MCF 10A (cell line): ENCODE measurements at regions of chr20 and their contacts with region 1.

Region 1: GRCh38 chr20:19995220-19995863 is 21.8 kb upstream of the NAA20 start:
- DNase-seq: peak; percentile 70
- H3K4me3 Mint-ChIP-seq: no peak overlapping the region
- H3K27ac Mint-ChIP-seq: peak overlapping the region; percentile 86
- H3K4me1 Mint-ChIP-seq: peaks cover 28% of the 10 kb centered on the region
- H3K27me3 Mint-ChIP-seq: no peaks in the 10 kb centered on the region
- CTCF ChIP-seq: peak; percentile 78

Region 2: GRCh38 chr20:19802492-19803158 is 192.7 kb before region 1 on chr20:
- CTCF ChIA-PET with region 1: interaction called, 11 read pairs
- POLR2A ChIA-PET with region 1: interaction called, 16 read pairs
- intact Hi-C with region 1: no loop called
- DNase-seq: peak; percentile 72
- H3K4me3 Mint-ChIP-seq: no peak overlapping the region
- H3K27ac Mint-ChIP-seq: peak overlapping the region; percentile 9
- H3K4me1 Mint-ChIP-seq: peaks cover 18% of the 10 kb centered on the region
- H3K27me3 Mint-ChIP-seq: no peaks in the 10 kb centered on the region
- CTCF ChIP-seq: peak; percentile 21

Region 3: DNA sequence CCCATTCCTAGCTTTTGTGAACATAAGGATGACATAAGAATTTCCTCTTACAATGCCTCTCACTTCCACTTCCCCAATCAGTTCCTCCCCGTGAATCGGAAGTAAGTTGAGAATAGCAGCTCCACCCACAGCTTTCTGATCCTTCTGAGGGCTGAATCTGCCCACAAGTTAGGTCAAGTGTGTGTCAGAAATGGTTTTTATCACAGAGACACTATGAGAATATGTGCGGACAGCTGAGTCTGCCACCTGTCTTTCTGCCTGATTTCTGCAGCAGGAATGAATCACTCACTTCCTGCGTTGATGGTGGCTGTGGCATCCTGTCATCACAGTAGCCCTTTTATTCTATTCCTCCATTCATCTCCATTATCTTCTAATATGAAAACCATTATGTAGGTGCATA is 167.1 kb before region 1 on chr20:
- CTCF ChIA-PET with region 1: interaction called, 15 read pairs
- POLR2A ChIA-PET with region 1: interaction called, 3 read pairs
- intact Hi-C with region 1: no loop called
- DNase-seq: peak; percentile 72
- H3K4me3 Mint-ChIP-seq: peak overlapping the region; percentile 9
- H3K27ac Mint-ChIP-seq: peak overlapping the region; percentile 60
- H3K4me1 Mint-ChIP-seq: peaks cover 17% of the 10 kb centered on the region
- H3K27me3 Mint-ChIP-seq: no peaks in the 10 kb centered on the region
- CTCF ChIP-seq: peak; percentile 46

Region 4: DNA sequence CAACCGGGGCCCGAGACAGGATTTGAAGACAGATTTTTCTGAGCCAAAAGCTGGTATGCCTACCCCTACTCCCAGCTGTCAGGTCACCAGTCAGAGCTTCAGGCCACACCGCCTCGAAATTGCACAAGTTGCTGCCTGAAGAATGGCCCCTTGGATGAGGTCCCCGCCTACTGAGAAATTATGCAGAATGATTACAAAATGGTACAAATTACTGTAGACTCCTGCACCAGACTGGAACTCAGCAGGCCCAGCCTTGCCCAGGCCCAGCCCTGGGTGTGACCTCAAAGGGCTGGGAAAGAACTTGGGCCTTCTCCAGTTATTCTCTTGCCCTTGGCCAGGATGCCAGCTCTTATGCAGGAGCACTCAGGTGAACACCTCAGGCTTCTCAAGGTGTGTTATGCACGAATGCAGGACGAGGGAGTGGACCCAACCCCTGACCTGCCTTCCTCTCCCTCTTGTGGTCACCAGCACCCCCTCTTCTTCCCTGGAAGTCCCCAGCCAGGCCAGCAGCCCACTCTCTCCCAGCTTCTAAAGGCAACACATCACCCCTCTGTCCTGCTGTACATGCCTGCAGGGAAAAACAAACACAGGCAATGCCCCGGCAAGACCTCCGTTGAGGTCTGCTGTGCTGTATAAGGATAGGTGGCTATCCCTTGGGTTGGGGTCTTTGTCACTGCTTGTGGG is 66.9 kb before region 1 on chr20:
- CTCF ChIA-PET with region 1: interaction called, 8 read pairs
- POLR2A ChIA-PET with region 1: interaction called, 41 read pairs
- intact Hi-C with region 1: no loop called
- DNase-seq: peak; percentile 97
- H3K4me3 Mint-ChIP-seq: peak overlapping the region; percentile 14
- H3K27ac Mint-ChIP-seq: peak overlapping the region; percentile 90
- H3K4me1 Mint-ChIP-seq: peaks cover 19% of the 10 kb centered on the region
- H3K27me3 Mint-ChIP-seq: no peaks in the 10 kb centered on the region
- CTCF ChIP-seq: no peak

Region 5: DNA sequence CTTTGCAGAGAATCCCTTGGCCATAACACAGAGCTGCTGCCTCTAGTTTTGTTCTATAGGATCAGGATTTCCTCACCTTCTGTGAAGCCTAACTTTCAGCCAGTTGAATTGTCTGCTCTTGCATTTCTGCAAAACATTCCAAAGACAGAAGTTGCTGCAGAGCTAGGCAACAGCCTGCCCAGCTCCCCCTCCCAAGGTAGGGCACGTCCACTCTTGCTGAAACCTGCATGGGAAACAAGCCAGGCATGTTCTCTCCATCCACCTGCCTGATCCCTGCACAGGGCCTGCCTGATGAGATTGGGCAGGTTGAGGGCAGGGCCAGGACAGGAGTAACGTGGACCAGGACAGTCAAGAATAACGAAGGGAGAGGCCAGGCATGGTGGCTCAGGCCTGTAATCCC is 37.1 kb before region 1 on chr20:
- CTCF ChIA-PET with region 1: interaction called, 7 read pairs
- POLR2A ChIA-PET with region 1: interaction called, 12 read pairs
- intact Hi-C with region 1: no loop called
- DNase-seq: peak; percentile 67
- H3K4me3 Mint-ChIP-seq: no peak overlapping the region
- H3K27ac Mint-ChIP-seq: peak overlapping the region; percentile 61
- H3K4me1 Mint-ChIP-seq: peaks cover 6% of the 10 kb centered on the region
- H3K27me3 Mint-ChIP-seq: no peaks in the 10 kb centered on the region
- CTCF ChIP-seq: no peak

Region 6: DNA sequence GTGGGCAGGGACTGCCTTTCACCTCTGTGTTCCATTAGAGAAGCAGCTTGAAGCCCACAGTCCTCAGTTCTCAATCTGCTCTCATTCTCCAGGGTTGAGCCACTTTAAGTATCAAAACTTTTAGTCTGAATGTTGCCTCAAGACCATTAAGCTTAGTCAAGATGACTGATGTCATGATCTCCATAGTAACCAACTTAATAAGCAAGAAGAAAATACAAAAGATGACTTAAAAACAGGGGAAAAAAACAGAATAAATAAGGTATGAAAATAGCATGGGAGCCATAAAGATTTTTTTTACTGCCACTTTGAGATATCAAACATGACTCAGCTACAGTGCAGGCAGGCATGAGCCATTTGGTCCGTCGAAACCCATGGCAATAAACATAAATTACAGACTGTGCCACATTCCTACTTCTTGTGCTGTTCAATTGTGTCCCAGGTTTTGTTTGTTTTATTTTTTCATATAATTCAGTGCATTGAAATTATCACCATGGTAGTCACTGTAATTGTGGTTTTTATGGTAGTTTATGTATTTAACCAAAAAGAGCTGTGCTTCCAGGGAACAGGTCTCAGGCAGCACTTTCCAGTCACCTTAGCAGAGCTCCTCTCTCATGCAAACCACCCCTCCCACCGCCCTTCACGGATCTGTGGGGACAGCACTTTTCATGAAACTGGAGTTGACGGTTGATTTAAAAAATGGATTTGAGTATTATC is 216.1 kb after region 1 on chr20:
- CTCF ChIA-PET with region 1: no interaction called
- POLR2A ChIA-PET with region 1: no interaction called
- intact Hi-C with region 1: no loop called
- DNase-seq: peak; percentile 6
- H3K4me3 Mint-ChIP-seq: no peak overlapping the region
- H3K27ac Mint-ChIP-seq: peak overlapping the region; percentile 96
- H3K4me1 Mint-ChIP-seq: peaks cover 17% of the 10 kb centered on the region
- H3K27me3 Mint-ChIP-seq: no peaks in the 10 kb centered on the region
- CTCF ChIP-seq: no peak